Common myeloid progenitor, CD34-positive (primary cell): ENCODE measurements at regions of chr16 and their contacts with region 1.

Region 1: DNA sequence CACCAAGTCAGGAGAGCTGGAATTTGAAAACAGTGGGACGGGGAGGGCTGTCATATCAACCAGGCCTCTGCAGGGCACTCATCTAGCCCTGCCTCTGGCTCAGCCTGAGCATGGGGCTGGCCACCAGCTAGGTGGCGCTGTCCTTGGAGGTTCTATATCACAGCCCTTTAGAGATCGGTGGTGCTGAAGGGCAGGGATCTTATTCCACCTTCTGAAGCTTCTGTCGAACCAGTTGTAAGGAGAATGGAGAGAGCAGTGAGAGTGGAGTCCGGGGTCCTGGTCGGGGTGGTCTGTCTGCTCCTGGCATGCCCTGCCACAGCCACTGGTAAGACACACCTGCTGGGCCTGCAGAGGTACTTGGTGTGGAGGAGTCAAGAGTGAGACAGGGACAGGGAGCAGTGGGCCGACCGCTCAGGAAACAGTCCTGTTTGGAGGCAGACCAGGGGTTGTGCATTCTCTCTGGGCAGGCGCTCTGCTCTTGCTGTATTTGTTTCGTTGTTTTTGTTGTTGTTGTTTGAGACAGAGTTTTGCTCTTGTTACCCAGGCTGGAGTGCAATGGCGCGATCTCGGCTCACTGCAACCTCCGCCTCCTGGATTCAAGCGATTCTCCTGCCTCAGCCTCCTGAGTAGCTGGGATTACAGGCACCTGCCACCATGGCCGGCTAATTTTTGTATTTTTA is at the start of gene CES3:
- DNase-seq: peak; percentile 66 to 84 (median 83)
- H3K4me3 ChIP-seq: peak within 1 kb of the TSS in 2 of 7 experiments; percentile 19 to 55
- H3K27ac ChIP-seq: no peak within 1 kb of the TSS
- H3K4me1 ChIP-seq: peaks cover 0 to 18% (median 13%) of the 10 kb centered on the region in 4 experiments
- H3K27me3 ChIP-seq: no peaks in the 10 kb centered on the region

Region 2: GRCh38 chr16:66977341-66978113 is 16.3 kb after region 1 on chr16:
- CTCF ChIA-PET with region 1: interaction called, 124 read pairs
- POLR2A ChIA-PET with region 1: no interaction called
- DNase-seq: peak; percentile 75 to 90 (median 89)
- H3K4me3 ChIP-seq: no peak overlapping the region
- H3K27ac ChIP-seq: no peak overlapping the region
- H3K4me1 ChIP-seq: peaks cover 0 to 1% (median 0%) of the 10 kb centered on the region in 4 experiments
- H3K27me3 ChIP-seq: peaks cover 0 to 5% (median 0%) of the 10 kb centered on the region in 5 experiments

Region 3: GRCh38 chr16:67191995-67192681 is 230.9 kb after region 1 on chr16 and contains the start of gene E2F4:
- CTCF ChIA-PET with region 1: no interaction called
- POLR2A ChIA-PET with region 1: no interaction called
- DNase-seq: peak; percentile 91 to 96 (median 96)
- H3K4me3 ChIP-seq: peak within 1 kb of the TSS; percentile 72 to 98 (median 91)
- H3K27ac ChIP-seq: peak within 1 kb of the TSS; percentile 66 to 90
- H3K4me1 ChIP-seq: peaks cover 0 to 22% (median 19%) of the 10 kb centered on the region in 4 experiments
- H3K27me3 ChIP-seq: peaks cover 0 to 1% (median 0%) of the 10 kb centered on the region in 5 experiments